ENCODE measurements at regions of chr9 and their contacts with region 1.

Region 1: DNA sequence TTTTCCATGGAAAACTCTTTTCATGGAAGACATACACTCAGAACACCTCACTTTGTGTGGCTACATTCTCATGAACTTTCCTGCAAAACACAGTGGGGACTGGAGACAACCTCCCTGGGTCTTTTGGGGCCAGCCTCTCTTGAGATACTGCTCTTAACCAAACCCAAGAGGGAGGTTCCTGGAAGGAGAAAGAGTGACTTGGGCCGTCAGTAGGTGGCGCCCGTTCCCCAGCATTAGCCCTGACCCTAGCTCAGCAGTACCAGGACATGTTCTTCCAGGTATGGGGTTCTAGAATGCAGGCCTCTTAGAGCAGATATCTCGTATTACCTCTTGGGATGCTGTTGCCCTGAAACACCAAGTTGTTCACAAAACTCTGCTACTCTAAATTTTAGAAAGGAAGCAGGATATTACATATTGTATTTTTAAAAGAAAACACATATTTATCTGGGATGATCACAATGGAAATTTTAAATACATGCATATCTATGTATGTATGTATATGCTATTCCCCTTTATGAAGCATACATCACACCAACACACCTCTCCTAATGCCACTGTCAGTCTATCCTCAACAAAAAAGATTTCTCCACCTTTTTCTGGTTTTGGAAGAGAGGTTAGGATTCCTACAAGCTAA is 15.8 kb upstream of the GLIS3 start:
- DNase-seq: peak; percentile 75
- CTCF ChIP-seq: peak; percentile 84

Region 2: GRCh38 chr9:4062966-4063365 is 252.7 kb before region 1 on chr9:
- CTCF ChIA-PET with region 1: no interaction called
- POLR2A ChIA-PET with region 1: no interaction called
- DNase-seq: no peak
- CTCF ChIP-seq: no peak

Region 3: GRCh38 chr9:4126180-4126865 is 189.4 kb before region 1 on chr9:
- CTCF ChIA-PET with region 1: no interaction called
- POLR2A ChIA-PET with region 1: no interaction called
- DNase-seq: no peak
- CTCF ChIP-seq: no peak

Region 4: DNA sequence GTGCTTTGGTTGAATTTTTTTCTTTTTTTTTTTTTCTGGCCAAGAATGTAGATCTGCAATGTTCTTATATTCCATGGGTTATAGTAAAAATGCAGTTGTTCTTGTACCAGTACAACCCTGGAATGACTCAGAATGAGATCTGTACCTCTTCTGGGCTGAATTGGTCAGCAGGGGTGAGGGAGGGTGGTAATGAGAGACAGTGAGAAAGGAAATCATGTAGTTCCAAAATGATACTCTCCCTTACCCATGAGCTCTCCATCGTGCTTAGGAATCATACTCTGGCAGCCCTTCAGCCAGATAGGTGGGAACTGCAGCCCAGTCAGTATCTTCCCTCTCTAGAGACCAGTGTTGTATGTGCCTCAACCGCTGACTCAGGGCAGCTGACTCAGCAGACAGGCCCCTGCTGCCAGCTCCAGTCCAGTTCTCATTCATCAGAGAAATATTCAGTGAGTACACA is 13.7 kb before region 1 on chr9:
- CTCF ChIA-PET with region 1: interaction called, 32 read pairs
- POLR2A ChIA-PET with region 1: no interaction called
- DNase-seq: no peak
- CTCF ChIP-seq: no peak

Region 5: DNA sequence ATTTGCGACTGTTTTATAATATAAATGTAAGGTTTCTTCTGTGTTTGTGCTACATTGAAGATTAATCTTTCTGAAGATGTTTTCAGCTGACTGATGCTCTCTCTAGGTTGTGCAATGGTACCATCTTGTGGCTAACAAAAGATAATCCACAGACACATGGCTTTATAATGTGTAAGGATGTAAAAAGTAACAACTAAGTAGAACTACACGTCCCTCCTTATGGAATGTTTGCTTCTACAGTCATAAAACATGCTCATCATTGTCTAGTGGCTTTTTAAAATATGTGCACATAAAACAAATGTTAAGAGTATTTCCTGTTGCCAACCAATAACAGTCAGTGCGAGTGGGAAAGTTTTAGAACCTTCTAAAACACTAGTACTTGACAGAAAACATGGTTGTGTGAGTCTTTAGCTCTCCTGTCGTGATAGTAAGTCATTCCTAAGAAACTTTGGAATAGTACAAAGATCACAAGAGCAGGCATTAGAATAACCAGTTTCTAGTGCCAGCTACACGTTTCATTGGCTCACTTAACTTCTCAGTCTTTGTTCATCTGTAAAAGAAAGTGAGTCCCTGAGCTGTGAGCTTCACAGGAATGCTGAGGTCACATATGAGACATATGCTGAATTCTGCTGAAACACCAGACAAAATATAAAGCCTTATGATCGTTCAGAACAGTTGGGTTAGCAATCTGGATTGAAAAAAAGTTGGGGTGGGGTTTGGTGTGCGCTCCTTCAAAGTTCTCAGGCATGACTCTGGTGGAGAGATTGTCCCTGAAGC is 59.9 kb after region 1 on chr9:
- CTCF ChIA-PET with region 1: interaction called, 17 read pairs
- POLR2A ChIA-PET with region 1: no interaction called
- DNase-seq: no peak
- CTCF ChIP-seq: peak; percentile 41